ENCODE measurements at regions of chr11 and their contacts with region 1.

Region 1: GRCh38 chr11:60396799-60397198 is 540 bp downstream of the MS4A14 start:
- DNase-seq: no peak
- ATAC-seq: peak; percentile 92
- H3K4me3 Mint-ChIP-seq: peak overlapping the region; percentile 71
- H3K27ac Mint-ChIP-seq: peak overlapping the region; percentile 95
- H3K4me1 Mint-ChIP-seq: peaks cover 69% of the 10 kb centered on the region
- H3K27me3 Mint-ChIP-seq: no peaks in the 10 kb centered on the region
- CTCF ChIP-seq: no peak

Region 2: GRCh38 chr11:59918987-59919589 is 477.7 kb before region 1 on chr11:
- CTCF ChIA-PET with region 1: no interaction called
- POLR2A ChIA-PET with region 1: no interaction called
- intact Hi-C with region 1: no loop called
- DNase-seq: no peak
- ATAC-seq: no peak
- H3K4me3 Mint-ChIP-seq: no peak overlapping the region
- H3K27ac Mint-ChIP-seq: no peak overlapping the region
- H3K4me1 Mint-ChIP-seq: no peaks in the 10 kb centered on the region
- H3K27me3 Mint-ChIP-seq: peaks cover 3% of the 10 kb centered on the region
- CTCF ChIP-seq: no peak

Region 3: DNA sequence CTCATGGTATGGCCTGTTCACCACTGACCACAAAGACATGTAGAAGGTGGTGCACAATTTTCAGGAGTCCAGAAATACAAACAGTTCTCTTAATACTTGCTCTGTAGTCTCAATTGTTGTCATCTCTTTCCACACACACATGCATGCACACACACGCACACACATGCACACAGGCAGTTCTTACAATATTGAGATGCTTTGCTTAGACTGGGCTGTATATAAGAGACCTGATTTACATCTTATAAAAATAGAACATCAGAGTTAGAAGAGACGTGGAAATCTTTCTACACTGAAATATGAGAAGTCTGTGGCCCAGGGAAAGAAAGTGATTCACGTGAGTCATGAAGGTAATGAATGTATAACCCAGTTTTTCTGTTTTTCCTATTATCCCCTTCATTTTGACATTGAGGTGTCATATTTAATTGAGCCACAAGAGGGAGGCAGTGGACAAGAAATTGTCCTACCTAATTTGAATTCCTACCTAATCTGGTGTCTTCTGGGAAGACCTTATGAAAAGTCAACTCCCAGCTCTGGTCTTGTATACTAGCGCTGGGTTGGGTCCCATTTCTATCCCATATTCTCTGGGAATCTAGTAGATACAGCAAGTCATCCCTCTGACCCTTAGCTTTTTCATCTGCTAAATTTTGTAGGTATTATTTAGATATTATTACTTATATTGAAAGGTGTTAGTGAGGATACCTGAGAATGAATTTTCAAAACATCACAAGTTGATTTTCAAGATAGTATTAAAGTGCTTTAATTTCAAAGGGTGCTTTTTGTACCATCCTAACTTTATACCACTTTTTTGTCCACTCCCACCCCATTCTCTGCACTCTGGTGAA is 131.2 kb before region 1 on chr11:
- CTCF ChIA-PET with region 1: no interaction called
- POLR2A ChIA-PET with region 1: no interaction called
- intact Hi-C with region 1: no loop called
- DNase-seq: no peak
- ATAC-seq: peak; percentile 76
- H3K4me3 Mint-ChIP-seq: no peak overlapping the region
- H3K27ac Mint-ChIP-seq: no peak overlapping the region
- H3K4me1 Mint-ChIP-seq: peaks cover 11% of the 10 kb centered on the region
- H3K27me3 Mint-ChIP-seq: no peaks in the 10 kb centered on the region
- CTCF ChIP-seq: peak; percentile 65

Region 4: GRCh38 chr11:60378354-60378753 is 18.4 kb before region 1 on chr11 and contains the start of gene MS4A7:
- CTCF ChIA-PET with region 1: no interaction called
- POLR2A ChIA-PET with region 1: interaction called, 31 read pairs
- intact Hi-C with region 1: loop called (anchors 1 kb)
- DNase-seq: peak; percentile 41
- ATAC-seq: peak; percentile 85
- H3K4me3 Mint-ChIP-seq: peak within 1 kb of the TSS; percentile 90
- H3K27ac Mint-ChIP-seq: peak within 1 kb of the TSS; percentile 99
- H3K4me1 Mint-ChIP-seq: peaks cover 84% of the 10 kb centered on the region
- H3K27me3 Mint-ChIP-seq: no peaks in the 10 kb centered on the region
- CTCF ChIP-seq: no peak
- total RNA-seq, gene MS4A7: 43.1 and 51.1 TPM in 2 replicates

Region 5: GRCh38 chr11:60447846-60448245 is 51.0 kb after region 1 on chr11:
- CTCF ChIA-PET with region 1: interaction called, 5 read pairs
- POLR2A ChIA-PET with region 1: interaction called, 4 read pairs
- intact Hi-C with region 1: loop called (anchors 2 kb)
- DNase-seq: no peak
- ATAC-seq: no peak
- H3K4me3 Mint-ChIP-seq: no peak overlapping the region
- H3K27ac Mint-ChIP-seq: peak overlapping the region; percentile 27
- H3K4me1 Mint-ChIP-seq: peaks cover 70% of the 10 kb centered on the region
- H3K27me3 Mint-ChIP-seq: no peaks in the 10 kb centered on the region
- CTCF ChIP-seq: no peak